Spleen (tissue), 13 donors: ENCODE measurements at regions of chr12 and their contacts with region 1.

Region 1: DNA sequence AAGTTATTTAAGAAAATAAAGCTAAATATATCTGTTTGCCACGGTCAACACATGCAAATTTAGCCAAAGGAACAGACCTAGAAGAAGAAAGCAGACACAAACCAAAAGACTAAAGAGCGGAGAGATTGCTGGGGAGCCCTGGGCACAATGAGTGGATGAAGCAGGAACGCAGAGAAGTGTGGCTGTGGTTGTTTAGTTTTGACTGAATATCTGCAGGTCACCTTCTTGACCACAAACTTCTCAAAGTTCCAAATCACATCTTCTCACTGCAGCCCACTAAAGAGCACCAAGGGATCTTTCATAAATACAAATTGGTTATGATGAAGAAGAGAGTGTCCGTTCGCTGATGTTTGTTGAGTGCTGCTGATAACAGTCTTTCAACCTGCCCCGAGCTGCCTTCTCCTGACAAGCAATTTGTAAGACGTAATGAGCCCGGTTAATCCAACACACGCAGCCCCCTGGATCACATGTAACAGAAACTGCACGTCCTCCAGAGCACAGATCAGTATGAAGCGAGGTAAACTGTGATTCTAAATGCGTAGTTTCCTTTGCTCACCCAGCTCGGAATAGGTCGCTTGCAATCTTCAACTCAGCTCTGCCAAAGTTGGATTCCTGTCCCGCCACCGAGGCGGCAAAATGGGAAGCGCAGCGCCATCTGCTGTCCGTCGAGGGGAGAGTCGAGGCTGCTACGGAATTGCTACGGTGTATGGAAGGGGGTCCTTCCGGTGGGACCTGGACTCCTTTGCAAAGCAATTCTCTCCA is 120.8 kb downstream of the GXYLT1 start:
- DNase-seq: peak; percentile 90
- H3K4me3 ChIP-seq: peak overlapping the region in 5 of 8 donors; percentile 22 to 54 (median 27)
- H3K27ac ChIP-seq: no peak overlapping the region
- H3K4me1 ChIP-seq: peaks cover 0 to 28% (median 15%) of the 10 kb centered on the region in 6 donors
- H3K27me3 ChIP-seq: peaks cover 0 to 11% (median 0%) of the 10 kb centered on the region in 7 donors
- CTCF ChIP-seq: peak; percentile 64 to 91 (median 81)
- POLR2A ChIP-seq: no peak

Region 2: DNA sequence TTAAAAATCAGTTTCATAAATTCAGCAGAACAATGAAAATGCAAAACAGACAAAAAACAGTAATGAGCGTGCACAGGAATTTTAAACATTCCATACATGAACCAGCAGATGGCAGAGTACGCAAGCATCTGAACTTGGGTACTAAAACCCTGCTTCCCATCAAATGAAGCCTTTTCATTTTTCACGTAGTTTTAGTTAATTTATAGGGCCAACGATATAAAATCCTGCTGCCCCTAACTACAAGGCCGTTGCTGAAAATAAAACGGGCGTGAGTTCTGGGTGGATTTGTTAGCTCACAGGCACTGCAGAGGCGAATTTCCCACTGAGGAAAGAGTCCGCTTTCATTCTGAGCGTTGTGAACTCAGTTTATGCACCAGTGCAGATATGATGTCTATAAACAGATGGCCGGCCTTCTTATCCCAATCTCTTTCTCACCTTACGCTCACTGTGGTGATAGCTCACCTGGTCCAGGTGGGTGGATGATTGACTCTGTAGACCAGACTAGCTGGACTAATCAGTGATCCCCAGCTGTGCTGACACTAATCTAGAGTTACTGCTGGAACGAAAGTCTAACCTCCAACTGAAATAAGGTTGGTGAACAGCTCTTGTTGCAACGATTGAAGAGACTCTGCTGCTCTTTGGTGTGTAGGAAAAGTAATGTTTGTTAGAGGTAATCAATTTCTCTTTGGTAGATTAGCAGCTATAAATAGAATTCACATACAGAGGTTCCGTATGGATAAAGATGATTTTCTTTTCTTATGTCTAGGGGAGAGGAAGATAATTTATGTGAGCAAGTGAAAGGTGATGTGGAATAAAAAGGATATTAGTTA is 746.6 kb before region 1 on chr12:
- intact Hi-C with region 1: loop called (anchors 10 kb)
- DNase-seq: no peak
- H3K4me3 ChIP-seq: no peak overlapping the region
- H3K27ac ChIP-seq: no peak overlapping the region
- H3K4me1 ChIP-seq: peaks cover 0 to 8% (median 2%) of the 10 kb centered on the region in 6 donors
- H3K27me3 ChIP-seq: no peaks in the 10 kb centered on the region
- CTCF ChIP-seq: peak in 10 of 11 experiments; percentile 12 to 72 (median 56)
- POLR2A ChIP-seq: no peak

Region 3: DNA sequence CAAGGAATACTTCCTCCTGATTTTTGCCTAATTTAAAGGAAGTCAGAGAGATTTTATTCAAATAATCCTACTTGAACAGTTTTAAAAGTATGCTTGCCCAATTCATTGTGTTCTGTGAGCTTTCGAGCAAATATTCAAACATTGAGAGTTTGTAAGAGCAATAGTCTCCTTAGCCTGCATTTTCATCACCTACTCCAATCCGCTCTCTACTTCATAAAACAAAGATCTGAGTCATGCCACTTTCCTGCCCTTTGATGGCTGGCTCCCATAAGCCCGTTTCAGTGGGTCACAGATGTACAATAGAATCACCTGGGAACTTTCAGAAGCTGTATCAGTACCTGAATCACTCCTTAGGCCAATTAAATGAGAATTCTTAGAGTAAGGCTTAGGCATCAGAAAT is 516.6 kb before region 1 on chr12:
- intact Hi-C with region 1: no loop called
- DNase-seq: no peak
- H3K4me3 ChIP-seq: no peak overlapping the region
- H3K27ac ChIP-seq: no peak overlapping the region
- H3K4me1 ChIP-seq: peaks cover 0 to 3% (median 0%) of the 10 kb centered on the region in 6 donors
- H3K27me3 ChIP-seq: no peaks in the 10 kb centered on the region
- CTCF ChIP-seq: no peak
- POLR2A ChIP-seq: no peak

Region 4: DNA sequence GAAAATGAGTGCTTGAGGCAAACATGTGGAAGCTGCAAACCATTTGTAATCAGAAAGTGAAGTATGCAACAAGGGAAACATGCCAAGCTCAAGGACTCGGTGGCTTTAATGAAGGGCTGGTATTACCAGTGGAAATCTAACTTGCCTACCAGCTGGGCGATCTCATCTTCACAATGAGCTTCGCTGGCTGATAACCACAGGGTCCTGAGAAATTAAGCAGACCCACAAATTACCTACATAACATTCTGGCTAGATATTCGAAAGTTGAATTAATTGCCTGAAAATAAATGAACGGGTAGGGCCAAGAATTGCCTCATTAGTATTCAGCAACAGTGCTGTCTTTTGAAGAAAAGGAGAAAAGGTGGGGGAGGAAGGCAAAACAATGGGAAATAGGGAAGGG is 396.4 kb before region 1 on chr12:
- intact Hi-C with region 1: no loop called
- DNase-seq: no peak
- H3K4me3 ChIP-seq: no peak overlapping the region
- H3K27ac ChIP-seq: no peak overlapping the region
- H3K4me1 ChIP-seq: no peaks in the 10 kb centered on the region
- H3K27me3 ChIP-seq: no peaks in the 10 kb centered on the region
- CTCF ChIP-seq: no peak
- POLR2A ChIP-seq: no peak

Region 5: DNA sequence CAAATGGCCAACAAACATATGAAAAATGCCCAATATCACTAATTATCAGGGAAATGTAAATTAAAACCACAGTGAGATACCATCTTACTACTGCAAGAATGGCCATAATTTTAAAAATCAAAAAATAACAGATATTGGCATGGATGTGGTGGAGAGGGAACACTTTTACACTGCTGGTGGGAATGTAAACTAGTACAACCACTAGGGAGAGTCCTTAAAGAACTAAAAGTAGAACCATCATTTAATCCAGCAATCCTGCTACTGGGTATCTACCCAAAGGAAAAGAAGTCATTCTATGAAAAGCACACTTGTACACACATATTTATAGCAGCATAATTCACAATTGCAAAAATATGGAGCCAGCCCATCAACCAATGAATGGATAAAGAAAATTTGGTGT is 338.9 kb before region 1 on chr12:
- intact Hi-C with region 1: loop called (anchors 10 kb)
- DNase-seq: no peak
- H3K4me3 ChIP-seq: no peak overlapping the region
- H3K27ac ChIP-seq: no peak overlapping the region
- H3K4me1 ChIP-seq: no peaks in the 10 kb centered on the region
- H3K27me3 ChIP-seq: no peaks in the 10 kb centered on the region
- CTCF ChIP-seq: peak in 5 of 11 experiments; percentile 22 to 70 (median 51)
- POLR2A ChIP-seq: no peak

Region 6: DNA sequence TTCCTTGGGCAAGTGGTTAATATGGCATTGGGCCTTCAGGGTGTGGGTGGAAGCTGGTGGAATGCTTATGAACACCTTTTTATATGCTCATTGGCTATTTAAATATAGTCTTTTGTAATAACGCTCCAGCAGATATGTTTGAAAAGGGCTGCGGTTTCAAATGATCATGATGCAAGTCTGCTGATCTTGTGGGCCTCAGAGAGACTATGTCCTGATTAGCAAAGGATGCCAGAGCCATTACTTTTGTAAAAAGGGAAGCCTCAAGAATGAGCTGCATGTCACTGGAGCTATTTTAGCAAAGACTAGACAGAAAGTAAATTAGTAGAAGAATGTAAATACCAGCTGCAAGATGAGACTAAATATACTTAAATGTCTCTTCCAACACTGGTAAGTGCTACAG is 79.7 kb before region 1 on chr12:
- intact Hi-C with region 1: no loop called
- DNase-seq: no peak
- H3K4me3 ChIP-seq: no peak overlapping the region
- H3K27ac ChIP-seq: no peak overlapping the region
- H3K4me1 ChIP-seq: no peaks in the 10 kb centered on the region
- H3K27me3 ChIP-seq: peaks cover 0 to 6% (median 0%) of the 10 kb centered on the region in 7 donors
- CTCF ChIP-seq: no peak
- POLR2A ChIP-seq: no peak

Region 7: GRCh38 chr12:41967668-41968500 is 56.0 kb before region 1 on chr12:
- intact Hi-C with region 1: no loop called
- DNase-seq: no peak
- H3K4me3 ChIP-seq: no peak overlapping the region
- H3K27ac ChIP-seq: no peak overlapping the region
- H3K4me1 ChIP-seq: no peaks in the 10 kb centered on the region
- H3K27me3 ChIP-seq: no peaks in the 10 kb centered on the region
- CTCF ChIP-seq: no peak
- POLR2A ChIP-seq: no peak